Heart left ventricle (tissue), 16 donors: ENCODE measurements at regions of chr16 and their contacts with region 1.

Region 1: DNA sequence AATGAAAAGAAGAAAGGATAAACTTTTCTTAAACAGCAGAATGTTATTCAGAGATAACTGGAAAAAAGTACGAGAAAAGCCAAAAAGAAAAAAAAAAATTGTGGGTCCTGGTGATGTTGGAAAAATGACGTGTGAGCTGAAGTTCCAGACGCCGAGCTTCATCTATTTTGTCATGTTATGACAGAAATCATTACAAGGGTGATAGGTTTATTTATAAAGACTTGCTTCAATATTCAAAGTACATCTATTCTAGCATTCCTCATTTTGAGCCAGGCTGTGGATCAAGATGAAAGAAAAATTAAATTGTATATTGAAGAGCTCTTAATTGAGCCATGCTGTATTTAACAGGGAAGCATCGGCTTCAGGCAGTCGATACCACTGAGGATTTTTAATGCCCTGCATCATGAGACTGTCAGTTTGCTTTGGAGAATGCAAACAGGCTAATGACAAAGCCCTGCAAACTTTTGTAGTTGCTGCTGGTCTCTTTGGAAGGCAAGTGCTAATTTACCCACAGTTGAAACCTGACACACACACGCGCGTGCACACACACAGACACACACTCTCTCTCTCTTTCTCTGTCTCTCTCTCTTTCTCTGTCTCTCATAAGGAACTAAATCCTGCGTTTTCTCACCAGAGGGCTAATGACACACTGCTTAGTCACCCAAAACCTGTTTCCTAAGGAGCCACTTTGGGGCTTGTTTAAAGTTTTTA is 110.7 kb downstream of the WWOX start:
- DNase-seq: no peak
- ATAC-seq: no peak
- H3K4me3 ChIP-seq: no peak overlapping the region
- H3K27ac ChIP-seq: no peak overlapping the region
- H3K4me1 ChIP-seq: no peaks in the 10 kb centered on the region
- H3K27me3 ChIP-seq: no peaks in the 10 kb centered on the region
- CTCF ChIP-seq: no peak
- POLR2A ChIP-seq: no peak

Region 2: GRCh38 chr16:78259873-78260272 is 49.8 kb after region 1 on chr16:
- intact Hi-C with region 1: loop called in 1 of 10 experiments (anchors 10 kb)
- DNase-seq: no peak
- ATAC-seq: no peak
- H3K4me3 ChIP-seq: no peak overlapping the region
- H3K27ac ChIP-seq: no peak overlapping the region
- H3K4me1 ChIP-seq: peaks cover 0 to 3% (median 0%) of the 10 kb centered on the region in 12 donors
- H3K27me3 ChIP-seq: no peaks in the 10 kb centered on the region
- CTCF ChIP-seq: no peak
- POLR2A ChIP-seq: no peak

Region 3: GRCh38 chr16:78292903-78293347 is 82.8 kb after region 1 on chr16:
- intact Hi-C with region 1: no loop called
- DNase-seq: no peak
- ATAC-seq: no peak
- H3K4me3 ChIP-seq: no peak overlapping the region
- H3K27ac ChIP-seq: no peak overlapping the region
- H3K4me1 ChIP-seq: peaks cover 0 to 11% (median 0%) of the 10 kb centered on the region in 12 donors
- H3K27me3 ChIP-seq: no peaks in the 10 kb centered on the region
- CTCF ChIP-seq: no peak
- POLR2A ChIP-seq: no peak